T-cell (primary cell): ENCODE measurements at regions of chr2 and their contacts with region 1.

Region 1: DNA sequence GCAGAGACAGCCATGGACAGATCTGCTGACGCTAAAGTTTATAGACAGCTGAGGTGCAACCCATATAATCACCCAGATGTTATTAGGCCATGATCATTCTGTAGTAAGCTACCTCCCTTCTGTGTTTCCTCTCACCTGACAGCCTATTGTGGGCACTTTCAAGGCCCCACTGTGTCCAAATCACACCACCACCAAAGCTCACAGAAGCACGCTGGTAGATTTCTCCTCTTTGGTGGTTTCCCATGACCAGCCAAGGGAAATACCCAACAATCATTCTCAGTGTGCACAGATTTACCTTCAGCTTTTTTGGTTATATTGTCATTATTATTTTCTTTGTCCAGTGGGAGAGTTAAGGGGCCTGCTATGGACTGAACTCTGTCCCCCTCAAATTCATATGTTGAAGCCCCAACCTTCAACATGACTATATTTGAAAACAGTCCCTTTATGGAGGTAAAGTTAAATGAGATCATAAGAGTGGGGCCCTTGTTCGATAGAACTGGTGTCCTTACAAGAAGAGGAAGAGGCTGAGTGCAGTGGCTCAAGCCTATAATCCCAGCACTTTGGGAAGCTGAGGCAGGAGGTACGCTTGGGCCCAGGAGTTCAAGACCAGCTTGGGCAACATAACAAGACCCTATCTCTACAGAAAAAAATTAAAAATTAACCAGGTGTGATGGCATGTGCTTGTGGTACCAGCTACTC is 74.0 kb upstream of the MSH6 start:
- DNase-seq: no peak
- ATAC-seq: no peak
- H3K4me3 ChIP-seq: no peak overlapping the region
- H3K4me3 Mint-ChIP-seq: no peak overlapping the region
- H3K27ac ChIP-seq: no peak overlapping the region
- H3K27ac Mint-ChIP-seq: no peak overlapping the region
- H3K4me1 ChIP-seq: no peaks in the 10 kb centered on the region
- H3K4me1 Mint-ChIP-seq: no peaks in the 10 kb centered on the region
- H3K27me3 ChIP-seq: peaks cover 0 to 2% of the 10 kb centered on the region in 2 experiments
- H3K27me3 Mint-ChIP-seq: peaks cover 0 to 9% of the 10 kb centered on the region in 2 donors

Region 2: DNA sequence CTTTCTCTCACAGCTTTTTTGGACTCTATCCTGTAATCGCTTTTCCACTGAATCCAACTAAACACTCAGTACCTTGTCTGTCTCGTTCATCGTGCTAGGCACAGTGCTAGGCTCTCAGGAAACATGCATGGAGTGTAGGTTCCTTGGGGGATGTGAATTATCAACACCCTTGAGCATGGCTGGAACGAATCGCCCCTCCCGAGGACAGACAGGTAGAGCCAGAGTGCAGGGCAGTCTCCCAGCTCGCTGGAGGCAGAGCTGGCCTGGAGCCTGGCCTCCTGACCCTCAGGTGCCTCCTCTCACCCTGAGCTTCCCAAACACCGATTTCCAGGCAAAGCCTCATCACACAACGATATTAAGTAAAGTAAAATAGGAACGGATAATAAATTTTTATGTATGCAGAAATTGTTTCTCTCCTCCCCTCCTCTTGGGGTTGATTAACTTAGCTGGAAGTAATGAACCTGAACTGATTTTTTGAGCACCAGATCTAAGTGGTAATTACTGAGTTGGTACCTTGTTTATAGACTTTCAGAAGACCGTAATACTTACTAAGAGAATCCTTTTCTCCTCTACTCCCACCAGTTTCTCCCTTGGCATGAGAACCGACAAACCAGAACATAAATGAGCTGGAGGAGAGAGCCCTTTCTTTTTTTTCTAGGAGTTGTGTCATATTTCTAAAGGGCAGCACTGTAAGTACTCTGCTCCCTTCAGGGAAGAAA is 215.5 kb before region 1 on chr2:
- CTCF ChIA-PET with region 1: interaction called in 1 of 2 experiments, 12 read pairs
- POLR2A ChIA-PET with region 1: no interaction called
- DNase-seq: no peak
- ATAC-seq: no peak
- H3K4me3 ChIP-seq: no peak overlapping the region
- H3K4me3 Mint-ChIP-seq: no peak overlapping the region
- H3K27ac ChIP-seq: no peak overlapping the region
- H3K27ac Mint-ChIP-seq: no peak overlapping the region
- H3K4me1 ChIP-seq: no peaks in the 10 kb centered on the region
- H3K4me1 Mint-ChIP-seq: peaks cover 0 to 5% (median 0%) of the 10 kb centered on the region in 3 donors
- H3K27me3 ChIP-seq: peaks cover 0 to 4% of the 10 kb centered on the region in 2 experiments
- H3K27me3 Mint-ChIP-seq: no peaks in the 10 kb centered on the region

Region 3: DNA sequence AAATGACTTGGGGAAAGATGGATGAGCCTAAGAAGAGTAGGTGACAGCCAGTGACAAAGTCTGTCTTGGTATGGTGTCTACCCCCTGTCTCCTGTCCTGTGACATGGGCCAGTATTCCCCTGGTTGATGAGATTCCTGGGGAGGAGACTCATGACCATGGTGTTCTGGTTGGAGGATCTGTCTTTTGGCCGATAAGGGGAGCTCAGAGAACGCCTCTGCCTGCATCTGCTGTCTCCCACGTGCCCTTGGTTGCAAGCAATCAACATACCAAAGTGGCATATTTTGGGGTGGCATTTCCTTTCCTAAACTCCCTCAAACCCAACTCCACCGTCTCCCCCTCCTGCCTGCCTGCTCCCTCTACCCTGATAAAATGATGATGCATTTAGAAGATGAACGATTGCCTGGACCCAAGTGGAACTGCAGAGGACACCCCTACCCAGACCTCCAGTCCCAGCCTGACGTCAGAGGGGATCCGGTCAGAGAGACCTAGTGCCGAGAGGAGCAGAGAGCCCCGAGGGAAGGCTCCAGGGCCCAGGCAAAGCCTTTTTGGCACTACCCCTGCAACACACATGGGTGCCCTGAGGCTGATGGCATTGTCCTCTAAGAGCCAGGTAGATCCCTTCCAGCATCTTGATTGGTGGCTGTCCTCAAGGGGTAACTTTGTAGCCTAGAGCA is 50.2 kb before region 1 on chr2:
- CTCF ChIA-PET with region 1: no interaction called
- POLR2A ChIA-PET with region 1: no interaction called
- DNase-seq: no peak
- ATAC-seq: no peak
- H3K4me3 ChIP-seq: no peak overlapping the region
- H3K4me3 Mint-ChIP-seq: no peak overlapping the region
- H3K27ac ChIP-seq: no peak overlapping the region
- H3K27ac Mint-ChIP-seq: no peak overlapping the region
- H3K4me1 ChIP-seq: no peaks in the 10 kb centered on the region
- H3K4me1 Mint-ChIP-seq: no peaks in the 10 kb centered on the region
- H3K27me3 ChIP-seq: no peaks in the 10 kb centered on the region
- H3K27me3 Mint-ChIP-seq: no peaks in the 10 kb centered on the region